Ascending aorta (tissue), 2 donors: ENCODE measurements at regions of chr17 and their contacts with region 1.

Region 1: GRCh38 chr17:60599620-60600489 is at the start of gene PPM1D:
- DNase-seq: peak; percentile 94 to 99
- H3K4me3 ChIP-seq: peak within 1 kb of the TSS; percentile 73 to 94
- H3K27ac ChIP-seq: peak within 1 kb of the TSS; percentile 97 to 98
- H3K4me1 ChIP-seq: peaks cover 0 to 15% of the 10 kb centered on the region in 2 donors
- H3K27me3 ChIP-seq: no peaks in the 10 kb centered on the region
- CTCF ChIP-seq: peak in 1 of 3 experiments; percentile 11
- total RNA-seq, gene PPM1D: 6.0 TPM

Region 2: DNA sequence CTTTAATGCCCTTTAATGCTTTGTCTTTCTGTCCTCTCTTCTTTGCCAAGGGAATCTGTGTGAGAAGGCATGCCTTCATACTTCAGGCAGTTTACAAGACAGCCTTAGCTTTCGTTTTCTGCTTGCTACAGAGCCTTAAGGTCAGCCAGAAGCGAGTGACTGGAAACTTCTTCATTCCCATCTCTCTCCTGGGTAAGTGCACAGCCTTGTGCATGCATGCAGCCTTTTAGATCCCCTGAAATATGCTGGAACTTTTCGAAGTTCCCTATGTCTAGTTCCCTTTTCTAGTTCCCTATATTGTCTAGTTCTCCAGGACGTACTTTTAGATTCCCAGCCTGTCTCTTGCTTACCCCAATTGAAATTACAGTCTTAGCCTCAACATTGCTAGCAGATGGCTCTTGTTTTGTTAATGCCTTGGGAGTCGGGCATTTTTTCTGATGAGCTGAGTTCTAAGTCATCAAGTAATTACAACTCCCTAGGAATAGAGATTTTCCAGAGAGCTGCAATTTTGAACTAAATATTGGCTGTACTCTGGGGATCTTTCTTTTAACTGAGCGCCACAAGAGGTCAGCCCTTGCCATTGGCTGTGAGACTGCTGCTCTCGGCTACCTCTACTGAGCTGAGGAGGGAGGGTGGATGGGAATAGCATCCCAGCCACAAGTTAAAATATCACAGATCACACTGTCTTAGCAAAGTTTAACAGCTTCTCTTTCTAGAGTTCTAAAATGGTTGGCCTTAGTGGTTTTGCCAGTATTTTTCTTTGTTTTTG is 22.5 kb before region 1 on chr17:
- intact Hi-C with region 1: loop called (anchors 1 kb)
- DNase-seq: peak in 1 of 2 donors; percentile 71
- H3K4me3 ChIP-seq: peak overlapping the region; percentile 34 to 60
- H3K27ac ChIP-seq: peak overlapping the region; percentile 47 to 52
- H3K4me1 ChIP-seq: peaks cover 0 to 7% of the 10 kb centered on the region in 2 donors
- H3K27me3 ChIP-seq: no peaks in the 10 kb centered on the region
- CTCF ChIP-seq: peak in 2 of 3 experiments; percentile 37 to 56

Region 3: DNA sequence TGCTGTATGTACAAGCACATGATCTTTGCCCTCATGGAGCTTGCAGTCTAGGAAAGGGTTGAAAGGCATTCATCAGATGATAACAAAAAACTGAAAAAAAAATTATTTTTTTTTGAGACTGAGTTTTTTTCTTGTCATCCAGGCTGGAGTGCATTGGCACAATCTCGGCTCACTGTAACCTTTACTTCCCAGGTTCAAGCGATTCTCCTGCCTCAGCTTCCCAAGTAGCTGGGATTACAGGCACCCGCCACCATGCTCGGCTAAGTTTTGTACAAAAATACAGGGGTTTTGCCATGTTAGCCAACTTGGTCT is 39.1 kb after region 1 on chr17:
- intact Hi-C with region 1: loop called (anchors 2 kb)
- DNase-seq: no peak
- H3K4me3 ChIP-seq: no peak overlapping the region
- H3K27ac ChIP-seq: no peak overlapping the region
- H3K4me1 ChIP-seq: no peaks in the 10 kb centered on the region
- H3K27me3 ChIP-seq: no peaks in the 10 kb centered on the region
- CTCF ChIP-seq: peak in 1 of 3 experiments; percentile 1

Region 4: GRCh38 chr17:60677308-60678124 is 77.7 kb after region 1 on chr17 and contains the start of gene BCAS3:
- intact Hi-C with region 1: loop called (anchors 1 kb)
- DNase-seq: peak; percentile 98 to 99
- H3K4me3 ChIP-seq: peak within 1 kb of the TSS; percentile 71 to 79
- H3K27ac ChIP-seq: peak within 1 kb of the TSS; percentile 63 to 69
- H3K4me1 ChIP-seq: peaks cover 0 to 10% of the 10 kb centered on the region in 2 donors
- H3K27me3 ChIP-seq: no peaks in the 10 kb centered on the region
- CTCF ChIP-seq: no peak
- total RNA-seq, gene BCAS3: 75.9 TPM

Region 5: GRCh38 chr17:60695960-60696359 is 96.1 kb after region 1 on chr17:
- intact Hi-C with region 1: no loop called
- DNase-seq: no peak
- H3K4me3 ChIP-seq: no peak overlapping the region
- H3K27ac ChIP-seq: no peak overlapping the region
- H3K4me1 ChIP-seq: no peaks in the 10 kb centered on the region
- H3K27me3 ChIP-seq: no peaks in the 10 kb centered on the region
- CTCF ChIP-seq: no peak